Heart left ventricle (tissue), 16 donors: ENCODE measurements at regions of chr10 and their contacts with region 1.

Region 1: GRCh38 chr10:124732931-124733570 is 11.1 kb downstream of the FAM53B start:
- DNase-seq: peak in 3 of 5 donors; percentile 69 to 78 (median 78)
- ATAC-seq: peak; percentile 16 to 66 (median 44)
- H3K4me3 ChIP-seq: peak overlapping the region in 2 of 12 donors; percentile 4 to 26
- H3K27ac ChIP-seq: peak overlapping the region; percentile 64 to 94 (median 88)
- H3K4me1 ChIP-seq: peaks cover 45 to 100% (median 96%) of the 10 kb centered on the region in 12 donors
- H3K27me3 ChIP-seq: no peaks in the 10 kb centered on the region
- CTCF ChIP-seq: no peak
- POLR2A ChIP-seq: no peak

Region 2: DNA sequence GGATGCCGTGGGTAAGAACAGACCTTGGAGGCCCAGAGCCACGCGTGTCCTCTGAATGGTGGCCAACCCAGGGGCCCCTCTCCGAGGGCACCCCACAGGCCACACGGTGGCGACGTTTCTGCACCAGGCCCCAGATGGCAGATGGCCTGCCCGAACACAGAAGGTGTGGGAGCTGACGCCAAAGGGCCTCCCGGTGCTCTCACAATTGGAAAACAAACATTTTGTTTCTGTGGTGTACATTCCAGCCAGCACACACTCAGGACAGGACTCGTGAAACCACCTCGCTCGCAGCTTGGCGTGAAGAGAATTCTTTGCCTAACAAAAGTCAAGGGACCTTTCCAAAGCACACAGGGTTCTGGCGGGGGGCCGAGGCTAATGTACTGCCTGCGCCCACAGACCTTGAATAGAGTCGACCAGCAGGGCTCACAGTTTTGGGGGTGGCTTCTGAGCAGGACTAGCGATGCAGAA is 101.0 kb before region 1 on chr10:
- intact Hi-C with region 1: loop called in 1 of 10 experiments (anchors 5 kb)
- DNase-seq: peak; percentile 53 to 83 (median 67)
- ATAC-seq: peak; percentile 68 to 84 (median 82)
- H3K4me3 ChIP-seq: no peak overlapping the region
- H3K27ac ChIP-seq: peak overlapping the region; percentile 2 to 77 (median 59)
- H3K4me1 ChIP-seq: peaks cover 7 to 78% (median 64%) of the 10 kb centered on the region in 12 donors
- H3K27me3 ChIP-seq: no peaks in the 10 kb centered on the region
- CTCF ChIP-seq: peak; percentile 41 to 72 (median 51)
- POLR2A ChIP-seq: no peak

Region 3: GRCh38 chr10:124641282-124642087 is 91.6 kb before region 1 on chr10:
- intact Hi-C with region 1: loop called in 2 of 10 experiments (anchors 5 kb)
- DNase-seq: peak in 4 of 5 donors; percentile 71 to 84 (median 80)
- ATAC-seq: peak; percentile 73 to 80 (median 80)
- H3K4me3 ChIP-seq: peak overlapping the region in 2 of 12 donors; percentile 10 to 14
- H3K27ac ChIP-seq: peak overlapping the region; percentile 48 to 93 (median 79)
- H3K4me1 ChIP-seq: peaks cover 11 to 100% (median 83%) of the 10 kb centered on the region in 12 donors
- H3K27me3 ChIP-seq: no peaks in the 10 kb centered on the region
- CTCF ChIP-seq: no peak
- POLR2A ChIP-seq: no peak

Region 4: DNA sequence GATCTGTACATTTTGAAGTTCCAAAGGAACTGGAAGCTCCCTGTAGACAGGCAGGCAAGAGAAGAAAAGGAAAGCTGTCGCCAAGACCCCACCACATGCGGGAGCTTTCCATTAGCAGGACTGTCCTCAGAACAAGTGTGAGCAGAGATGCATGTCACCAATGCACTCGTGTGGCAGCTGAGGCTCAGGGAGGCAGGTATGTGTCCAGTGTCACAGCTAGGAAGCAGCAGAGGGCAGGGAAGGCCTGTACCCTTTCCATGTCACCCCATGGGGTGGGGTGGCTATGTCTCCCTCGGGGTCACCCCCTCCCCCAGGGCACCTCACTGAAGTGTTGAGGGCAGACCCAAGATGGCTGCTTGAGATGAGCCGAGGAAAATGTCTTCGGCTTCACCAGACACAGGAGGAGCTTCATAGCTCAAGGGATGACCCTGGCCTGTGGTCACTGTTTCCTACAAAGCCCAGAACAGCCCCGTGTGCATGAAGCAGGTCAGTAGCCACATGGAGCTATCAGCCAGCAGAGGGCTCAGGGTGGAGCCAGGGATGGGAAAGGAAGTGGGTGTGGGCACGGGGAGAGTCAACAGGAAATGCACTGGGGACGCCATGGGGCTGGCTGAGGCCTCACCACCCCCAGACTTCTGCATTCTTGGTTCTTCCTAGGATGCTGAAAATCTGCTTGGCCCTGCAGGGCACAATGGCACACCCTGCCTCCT is 85.5 kb before region 1 on chr10:
- intact Hi-C with region 1: loop called in 2 of 10 experiments (anchors 5 kb)
- DNase-seq: peak; percentile 75 to 88 (median 84)
- ATAC-seq: peak; percentile 34 to 67 (median 56)
- H3K4me3 ChIP-seq: peak overlapping the region in 1 of 12 donors; percentile 7
- H3K27ac ChIP-seq: peak overlapping the region; percentile 33 to 97 (median 75)
- H3K4me1 ChIP-seq: peaks cover 44 to 100% (median 94%) of the 10 kb centered on the region in 12 donors
- H3K27me3 ChIP-seq: no peaks in the 10 kb centered on the region
- CTCF ChIP-seq: peak in 10 of 12 donors; percentile 11 to 50 (median 28)
- POLR2A ChIP-seq: no peak

Region 5: DNA sequence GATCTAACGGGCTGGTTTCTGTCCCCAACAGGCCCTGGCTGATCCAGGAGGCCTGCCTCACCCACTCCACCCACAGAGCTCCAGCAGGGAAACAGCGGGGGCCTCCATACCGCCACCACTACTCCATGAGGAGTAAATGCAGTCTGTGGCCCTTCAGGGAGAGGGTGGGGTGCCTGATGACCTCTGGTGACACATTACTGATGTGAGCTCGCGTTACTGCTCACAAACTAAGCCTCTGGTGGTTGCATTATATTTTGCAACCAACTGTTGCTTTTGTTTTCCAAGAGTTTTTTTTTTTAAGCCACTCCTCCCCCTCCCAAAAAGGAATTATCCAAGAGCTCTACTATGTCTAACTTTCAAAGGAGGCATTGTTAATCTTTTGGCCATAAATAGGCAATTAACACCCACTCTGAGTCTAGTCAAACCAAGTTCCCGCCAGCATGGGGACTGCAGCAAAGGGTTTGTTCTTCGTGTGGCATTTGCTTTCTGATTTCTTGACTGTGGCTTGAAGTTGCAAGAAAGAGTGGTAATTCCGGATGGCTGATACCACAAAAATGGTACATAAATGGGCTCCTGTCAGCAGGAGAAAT is 61.5 kb before region 1 on chr10:
- intact Hi-C with region 1: loop called in 1 of 10 experiments (anchors 5 kb)
- DNase-seq: peak in 4 of 5 donors; percentile 53 to 81 (median 72)
- ATAC-seq: peak in 3 of 4 donors; percentile 54 to 61 (median 60)
- H3K4me3 ChIP-seq: no peak overlapping the region
- H3K27ac ChIP-seq: peak overlapping the region; percentile 18 to 86 (median 66)
- H3K4me1 ChIP-seq: peaks cover 37 to 100% (median 94%) of the 10 kb centered on the region in 12 donors
- H3K27me3 ChIP-seq: no peaks in the 10 kb centered on the region
- CTCF ChIP-seq: peak; percentile 13 to 62 (median 38)
- POLR2A ChIP-seq: no peak

Region 6: DNA sequence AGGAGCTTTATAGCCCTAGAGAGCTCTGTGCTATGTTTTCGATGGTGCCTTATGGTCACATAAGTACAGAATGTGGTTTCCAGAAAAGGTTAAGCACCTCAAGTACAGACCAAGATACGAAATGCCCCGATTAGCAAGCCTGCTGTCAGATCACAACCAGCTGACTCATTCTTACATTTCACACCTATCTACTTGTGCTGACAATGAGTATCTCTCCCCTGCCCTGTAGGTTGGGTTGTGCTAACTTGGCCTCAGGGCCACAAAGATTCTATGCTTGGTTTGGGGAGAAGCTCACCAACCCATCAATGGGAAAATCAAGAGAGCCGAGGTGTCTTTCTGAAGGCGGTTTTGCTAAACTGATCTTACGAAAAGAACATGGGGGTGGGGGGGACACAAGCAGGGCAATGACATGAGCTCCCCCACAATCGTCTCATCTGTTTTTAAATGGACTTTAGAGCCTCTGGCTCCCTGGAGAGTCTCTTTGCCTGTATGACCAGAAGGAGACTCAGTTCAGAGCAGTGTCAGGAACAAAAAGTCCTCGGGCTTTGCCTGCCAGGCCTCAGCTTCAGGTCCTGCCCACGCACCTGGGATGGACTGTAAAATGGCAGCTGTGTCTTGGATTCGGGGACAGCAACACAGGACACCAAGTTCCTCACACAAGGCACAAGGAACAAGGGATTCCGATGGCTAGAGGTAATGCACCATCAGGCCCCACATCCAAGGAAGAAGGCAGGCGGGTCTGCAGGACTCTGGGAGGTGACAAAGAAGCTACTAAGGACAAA is 44.0 kb before region 1 on chr10:
- intact Hi-C with region 1: loop called in 7 of 10 experiments (anchors 5 to 10 kb)
- DNase-seq: no peak
- ATAC-seq: peak in 2 of 4 donors; percentile 43 to 52
- H3K4me3 ChIP-seq: no peak overlapping the region
- H3K27ac ChIP-seq: peak overlapping the region in 11 of 12 donors; percentile 7 to 89 (median 66)
- H3K4me1 ChIP-seq: peaks cover 7 to 100% (median 78%) of the 10 kb centered on the region in 12 donors
- H3K27me3 ChIP-seq: no peaks in the 10 kb centered on the region
- CTCF ChIP-seq: no peak
- POLR2A ChIP-seq: no peak

Region 7: GRCh38 chr10:124701435-124701834 is 31.6 kb before region 1 on chr10:
- intact Hi-C with region 1: loop called in 1 of 10 experiments (anchors 5 kb)
- DNase-seq: peak; percentile 94 to 98 (median 97)
- ATAC-seq: peak; percentile 84 to 90 (median 85)
- H3K4me3 ChIP-seq: no peak overlapping the region
- H3K27ac ChIP-seq: peak overlapping the region; percentile 88 to 97 (median 93)
- H3K4me1 ChIP-seq: peaks cover 49 to 100% (median 99%) of the 10 kb centered on the region in 12 donors
- H3K27me3 ChIP-seq: no peaks in the 10 kb centered on the region
- CTCF ChIP-seq: peak in 1 of 12 donors; percentile 13
- POLR2A ChIP-seq: peak in 1 of 2 donors; percentile 23